Prostate gland (tissue), 2 donors: ENCODE measurements at regions of chr14 and their contacts with region 1.

Region 1: DNA sequence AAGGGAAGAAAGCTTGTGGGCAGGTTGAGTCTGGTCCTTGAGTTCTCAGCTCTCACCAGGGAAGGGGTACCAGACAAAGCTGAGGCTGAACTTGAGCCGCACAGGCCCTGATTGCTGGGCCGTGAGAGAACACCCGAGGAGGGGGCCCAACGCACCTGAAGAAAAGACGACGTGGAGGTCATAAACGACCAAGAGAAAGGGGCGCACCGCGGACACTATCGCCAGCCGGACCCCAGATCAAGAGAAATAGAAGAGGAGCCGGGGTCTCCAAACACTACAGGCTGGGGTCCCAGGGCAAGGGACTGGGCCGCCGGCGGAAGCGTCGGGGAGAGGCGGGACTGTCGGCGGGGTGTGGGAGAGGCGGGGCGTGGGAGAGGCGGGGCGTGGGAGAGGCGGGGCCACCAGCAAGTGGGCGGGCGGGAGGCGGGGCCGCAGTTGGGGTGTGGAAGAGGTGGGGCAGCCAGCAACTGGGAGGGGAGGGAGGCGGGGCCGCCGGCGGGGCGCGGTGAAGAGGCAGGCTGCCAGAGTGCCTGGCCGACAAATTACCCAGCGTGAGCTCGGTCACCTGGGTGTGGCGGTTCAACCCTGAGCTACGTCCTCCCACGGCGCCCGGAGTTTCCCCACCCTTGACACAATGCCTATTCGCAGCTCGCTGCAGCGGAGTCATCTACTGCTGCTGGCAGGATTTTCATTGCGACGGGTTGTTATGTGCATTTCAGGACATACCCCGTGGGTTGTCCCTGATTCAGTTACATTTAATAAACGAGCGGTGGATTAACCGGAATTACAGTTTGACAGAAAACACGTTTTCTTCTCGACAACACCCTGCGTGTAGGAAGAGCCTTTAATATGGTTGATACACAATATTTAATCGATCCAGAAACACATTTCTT is 15.5 kb upstream of the NEMF start:
- DNase-seq: peak; percentile 97
- H3K4me3 ChIP-seq: peak overlapping the region; percentile 45 to 49
- H3K27ac ChIP-seq: peak overlapping the region; percentile 94 to 98
- H3K4me1 ChIP-seq: no peaks in the 10 kb centered on the region
- H3K27me3 ChIP-seq: no peaks in the 10 kb centered on the region
- CTCF ChIP-seq: peak in 1 of 4 experiments; percentile 4
- POLR2A ChIP-seq: peak; percentile 74

Region 2: GRCh38 chr14:49808780-49809179 is 59.3 kb before region 1 on chr14:
- intact Hi-C with region 1: no loop called
- DNase-seq: no peak
- H3K4me3 ChIP-seq: no peak overlapping the region
- H3K27ac ChIP-seq: no peak overlapping the region
- H3K4me1 ChIP-seq: no peaks in the 10 kb centered on the region
- H3K27me3 ChIP-seq: no peaks in the 10 kb centered on the region
- CTCF ChIP-seq: no peak
- POLR2A ChIP-seq: no peak

Region 3: GRCh38 chr14:50101417-50101816 is 233.3 kb after region 1 on chr14:
- intact Hi-C with region 1: loop called (anchors 5 kb)
- DNase-seq: no peak
- H3K4me3 ChIP-seq: no peak overlapping the region
- H3K27ac ChIP-seq: peak overlapping the region in 1 of 2 donors; percentile 53
- H3K4me1 ChIP-seq: peaks cover 3% of the 10 kb centered on the region
- H3K27me3 ChIP-seq: no peaks in the 10 kb centered on the region
- CTCF ChIP-seq: no peak
- POLR2A ChIP-seq: no peak

Region 4: GRCh38 chr14:50231475-50232275 is 363.6 kb after region 1 on chr14 and contains the start of gene SOS2:
- intact Hi-C with region 1: loop called (anchors 10 kb)
- DNase-seq: peak; percentile 83
- H3K4me3 ChIP-seq: peak within 1 kb of the TSS; percentile 75 to 77
- H3K27ac ChIP-seq: peak within 1 kb of the TSS; percentile 90 to 97
- H3K4me1 ChIP-seq: no peaks in the 10 kb centered on the region
- H3K27me3 ChIP-seq: no peaks in the 10 kb centered on the region
- CTCF ChIP-seq: peak in 1 of 4 experiments; percentile 22
- POLR2A ChIP-seq: peak; percentile 74
- total RNA-seq, gene SOS2: 22.6 to 41.4 TPM

Region 5: GRCh38 chr14:50311975-50312733 is 444.1 kb after region 1 on chr14 and contains the starts of genes DMAC2L and L2HGDH:
- intact Hi-C with region 1: loop called (anchors 5 kb)
- DNase-seq: peak; percentile 91
- H3K4me3 ChIP-seq: peak within 1 kb of the TSS; percentile 55 to 71
- H3K27ac ChIP-seq: peak within 1 kb of the TSS; percentile 93 to 94
- H3K4me1 ChIP-seq: no peaks in the 10 kb centered on the region
- H3K27me3 ChIP-seq: no peaks in the 10 kb centered on the region
- CTCF ChIP-seq: peak in 3 of 4 experiments; percentile 29 to 69 (median 50)
- POLR2A ChIP-seq: peak; percentile 77
- total RNA-seq, gene DMAC2L: 6.9 to 24.5 TPM
- total RNA-seq, gene L2HGDH: 5.6 to 6.5 TPM